Aorta (tissue), 5 donors: ENCODE measurements at regions of chr2 and their contacts with region 1.

Region 1: GRCh38 chr2:86079981-86080911 is 25.4 kb downstream of the POLR1A start:
- DNase-seq: peak; percentile 89 to 94
- ATAC-seq: peak; percentile 92
- H3K4me3 ChIP-seq: no peak overlapping the region
- H3K27ac ChIP-seq: no peak overlapping the region
- H3K4me1 ChIP-seq: no peaks in the 10 kb centered on the region
- H3K27me3 ChIP-seq: no peaks in the 10 kb centered on the region

Region 2: DNA sequence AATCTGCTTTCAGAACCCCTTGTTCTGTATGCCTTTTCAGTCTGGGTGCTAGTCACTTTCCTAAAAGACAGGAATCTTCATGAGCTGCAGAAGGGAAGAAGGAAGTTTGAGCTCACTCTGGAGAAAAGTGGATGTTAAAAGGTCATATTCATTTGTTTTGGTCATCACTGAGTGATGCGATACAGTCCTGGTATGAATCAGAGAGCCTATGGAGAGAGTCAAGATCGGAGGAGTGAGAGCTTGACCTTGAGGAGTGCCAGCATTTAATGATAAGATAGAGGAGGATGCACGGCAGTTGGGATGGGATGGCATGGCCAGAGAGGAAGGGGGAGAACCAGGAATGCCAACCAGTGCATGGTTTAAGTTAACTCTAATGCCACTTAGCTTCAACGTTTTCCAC is 444.6 kb before region 1 on chr2:
- intact Hi-C with region 1: loop called in 1 of 2 experiments (anchors 10 kb)
- DNase-seq: no peak
- ATAC-seq: no peak
- H3K4me3 ChIP-seq: no peak overlapping the region
- H3K27ac ChIP-seq: no peak overlapping the region
- H3K4me1 ChIP-seq: no peaks in the 10 kb centered on the region
- H3K27me3 ChIP-seq: no peaks in the 10 kb centered on the region

Region 3: GRCh38 chr2:85723707-85724360 is 356.4 kb before region 1 on chr2:
- intact Hi-C with region 1: loop called (anchors 2 to 5 kb)
- DNase-seq: no peak
- ATAC-seq: no peak
- H3K4me3 ChIP-seq: no peak overlapping the region
- H3K27ac ChIP-seq: no peak overlapping the region
- H3K4me1 ChIP-seq: no peaks in the 10 kb centered on the region
- H3K27me3 ChIP-seq: no peaks in the 10 kb centered on the region

Region 4: GRCh38 chr2:85826990-85827878 is 253.0 kb before region 1 on chr2:
- intact Hi-C with region 1: loop called (anchors 1 to 2 kb)
- DNase-seq: peak; percentile 83 to 93
- ATAC-seq: peak; percentile 94
- H3K4me3 ChIP-seq: no peak overlapping the region
- H3K27ac ChIP-seq: no peak overlapping the region
- H3K4me1 ChIP-seq: no peaks in the 10 kb centered on the region
- H3K27me3 ChIP-seq: no peaks in the 10 kb centered on the region